Aorta (tissue), 5 donors: ENCODE measurements at regions of chr11 and their contacts with region 1.

Region 1: DNA sequence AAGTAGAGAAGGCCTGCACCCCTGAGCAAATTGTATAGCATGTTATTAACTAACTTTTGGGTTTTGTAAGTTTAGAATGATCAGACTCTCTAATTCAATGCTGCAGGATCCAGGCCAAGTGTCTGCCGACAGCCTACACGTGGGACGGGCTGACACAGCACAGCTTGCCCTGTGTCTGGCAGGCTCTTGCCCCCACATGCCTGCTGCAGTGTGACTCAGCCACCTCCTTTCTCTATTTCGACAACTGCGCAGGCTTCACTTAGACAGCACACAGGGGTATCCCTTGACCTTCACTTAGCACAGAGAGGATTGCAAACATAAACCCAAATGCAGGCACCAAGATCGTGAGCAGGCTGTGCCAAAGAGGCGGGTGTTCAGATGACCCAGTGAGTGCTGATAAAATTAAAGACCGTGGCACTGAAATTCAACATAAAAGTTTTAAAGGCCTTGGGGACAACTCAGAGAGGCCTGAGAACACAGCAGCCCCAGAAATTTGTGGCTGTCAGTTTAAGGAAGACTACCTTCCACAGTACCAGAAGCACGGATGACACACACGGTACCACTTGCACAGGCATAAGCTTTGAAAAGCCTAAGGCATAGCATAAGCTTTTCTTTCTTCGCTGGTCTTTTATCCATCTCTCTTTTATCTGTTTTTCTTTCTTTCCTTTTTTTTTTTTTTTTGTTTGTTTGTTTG is 37.8 kb downstream of the SCN3B start:
- DNase-seq: no peak
- ATAC-seq: peak; percentile 27
- H3K4me3 ChIP-seq: no peak overlapping the region
- H3K27ac ChIP-seq: no peak overlapping the region
- H3K4me1 ChIP-seq: no peaks in the 10 kb centered on the region
- H3K27me3 ChIP-seq: no peaks in the 10 kb centered on the region

Region 2: GRCh38 chr11:123560006-123560405 is 56.6 kb before region 1 on chr11:
- intact Hi-C with region 1: no loop called
- DNase-seq: peak; percentile 76 to 81
- ATAC-seq: peak; percentile 73
- H3K4me3 ChIP-seq: peak overlapping the region; percentile 22 to 30
- H3K27ac ChIP-seq: no peak overlapping the region
- H3K4me1 ChIP-seq: no peaks in the 10 kb centered on the region
- H3K27me3 ChIP-seq: no peaks in the 10 kb centered on the region

Region 3: DNA sequence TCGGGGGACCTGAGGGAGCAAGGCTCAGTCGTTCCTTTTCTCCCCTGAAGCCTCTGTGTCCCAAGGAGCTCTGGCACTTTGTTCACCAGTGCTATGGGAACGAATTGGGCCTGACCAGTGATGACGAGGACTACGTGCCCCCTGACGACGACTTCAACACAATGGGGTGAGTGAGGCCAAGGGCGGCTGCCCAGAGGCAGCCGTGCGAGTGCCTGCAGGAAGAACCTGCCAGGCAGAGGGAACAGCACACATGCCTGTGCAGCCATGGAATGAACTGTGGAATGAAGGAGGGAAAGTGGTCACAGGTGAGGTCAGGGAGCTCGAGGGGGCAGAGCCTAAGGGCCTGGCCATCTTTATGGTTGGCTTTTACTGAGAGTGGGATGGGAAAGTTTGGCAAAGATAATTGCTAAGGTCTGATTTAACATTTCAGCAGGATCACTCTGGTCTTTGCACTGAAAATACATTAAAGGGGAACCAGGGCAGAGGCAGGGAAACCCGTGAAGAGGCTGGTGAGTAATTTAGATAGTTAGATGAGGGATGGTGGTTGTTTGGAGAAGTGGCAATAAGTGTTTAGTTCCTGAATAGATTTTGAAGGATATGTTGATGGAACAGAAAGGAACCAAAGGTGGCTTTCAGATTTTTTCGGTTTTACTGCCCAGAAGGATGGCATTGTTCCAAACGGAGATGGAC is 13.1 kb before region 1 on chr11:
- intact Hi-C with region 1: loop called in 1 of 2 experiments (anchors 1 kb)
- DNase-seq: no peak
- ATAC-seq: no peak
- H3K4me3 ChIP-seq: no peak overlapping the region
- H3K27ac ChIP-seq: no peak overlapping the region
- H3K4me1 ChIP-seq: no peaks in the 10 kb centered on the region
- H3K27me3 ChIP-seq: no peaks in the 10 kb centered on the region